ENCODE measurements at regions of chr19 and their contacts with region 1.

Region 1: GRCh38 chr19:12983542-12984142 is 11.6 kb upstream of the NFIX start:
- DNase-seq: peak; percentile 77
- H3K4me3 Mint-ChIP-seq: no peak overlapping the region
- H3K27ac Mint-ChIP-seq: no peak overlapping the region
- H3K4me1 Mint-ChIP-seq: no peaks in the 10 kb centered on the region
- H3K27me3 Mint-ChIP-seq: peaks cover 5% of the 10 kb centered on the region

Region 2: DNA sequence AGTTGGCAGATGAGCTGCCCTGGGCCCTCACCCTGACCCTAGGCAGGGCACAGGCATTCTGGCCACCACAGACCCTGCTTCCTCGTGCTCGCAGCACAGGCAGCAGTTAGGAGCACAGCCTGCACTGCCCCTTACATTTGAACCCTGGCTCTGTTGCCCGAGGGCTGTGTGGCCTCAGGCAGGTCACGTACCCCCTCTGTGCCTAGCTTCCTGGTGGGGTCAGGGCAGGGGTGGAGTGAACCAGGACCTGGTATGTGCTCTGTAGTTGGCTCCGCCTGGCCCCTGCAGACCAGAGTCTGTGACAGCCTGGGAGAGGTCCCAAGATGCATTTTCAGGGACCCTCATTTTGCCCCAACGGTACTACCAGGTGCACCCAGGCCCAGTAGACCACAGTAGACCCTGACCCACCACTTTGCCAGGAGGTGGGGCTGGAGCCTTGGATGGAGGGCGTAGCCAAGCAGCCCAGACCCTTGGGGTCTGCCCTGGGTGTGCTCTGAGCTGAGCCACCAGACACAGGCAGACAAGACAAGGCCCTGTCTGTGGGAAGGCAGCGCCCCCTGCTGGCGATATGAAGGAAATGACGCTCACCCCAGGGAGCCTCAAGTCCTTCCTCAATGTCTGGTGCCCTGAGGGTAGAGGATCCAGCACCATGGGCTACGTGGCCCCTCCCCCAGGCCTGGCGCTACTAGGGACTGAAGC is 109.9 kb after region 1 on chr19:
- intact Hi-C with region 1: loop called (anchors 1 kb)
- DNase-seq: peak; percentile 71
- H3K4me3 Mint-ChIP-seq: no peak overlapping the region
- H3K27ac Mint-ChIP-seq: no peak overlapping the region
- H3K4me1 Mint-ChIP-seq: peaks cover 21% of the 10 kb centered on the region
- H3K27me3 Mint-ChIP-seq: peaks cover 28% of the 10 kb centered on the region